ENCODE measurements at regions of chr3 and their contacts with region 1.

Region 1: DNA sequence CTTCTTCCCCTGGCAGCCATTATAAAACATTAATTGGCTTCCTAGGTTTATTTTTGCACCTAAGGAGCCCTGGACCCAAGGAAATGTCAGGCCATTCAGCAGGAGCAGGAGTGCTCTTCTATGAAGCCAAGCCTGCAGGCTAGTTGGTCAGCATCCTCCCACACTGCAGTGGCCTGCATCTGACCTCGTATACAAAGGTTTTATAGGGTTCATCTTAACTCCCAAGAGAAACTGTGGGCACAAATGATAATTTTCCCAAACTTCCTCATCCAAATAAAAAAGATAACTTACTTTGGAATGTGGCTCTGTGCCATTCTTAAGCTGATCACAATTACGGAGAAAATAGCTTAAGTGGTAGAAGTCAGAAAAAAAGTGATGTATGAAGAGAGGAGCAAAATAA is 19.4 kb downstream of the PLSCR1 start:
- DNase-seq: no peak
- ATAC-seq: no peak
- H3K4me3 ChIP-seq: no peak overlapping the region
- H3K27ac ChIP-seq: no peak overlapping the region
- H3K4me1 ChIP-seq: peaks cover 10% of the 10 kb centered on the region
- H3K27me3 ChIP-seq: no peaks in the 10 kb centered on the region
- CTCF ChIP-seq: no peak
- POLR2A ChIP-seq: no peak
- RAD21 ChIP-seq: no peak

Region 2: DNA sequence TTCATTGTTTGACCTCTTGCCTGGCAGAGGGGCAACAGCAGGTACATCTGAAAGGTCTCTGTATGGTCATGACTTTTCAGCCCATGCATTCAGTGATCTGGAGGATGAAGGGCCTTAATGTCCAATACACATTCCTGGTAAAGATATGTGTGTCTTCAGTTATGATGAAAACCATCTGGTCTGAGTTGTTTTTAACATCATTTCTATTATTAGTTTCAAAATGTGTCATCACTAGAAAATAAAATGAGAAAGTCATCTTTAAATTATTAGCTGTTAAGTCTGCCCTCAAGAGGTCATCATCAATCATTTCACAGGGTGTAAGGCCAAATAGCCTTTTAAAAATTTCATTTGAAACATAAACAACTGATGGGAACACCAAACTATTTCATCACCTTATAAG is 182.0 kb before region 1 on chr3:
- CTCF ChIA-PET with region 1: no interaction called
- POLR2A ChIA-PET with region 1: no interaction called
- dilution Hi-C with region 1: no loop called
- in situ Hi-C with region 1: no loop called
- intact Hi-C with region 1: loop called (anchors 5 kb)
- DNase-seq: peak; percentile 54
- ATAC-seq: no peak
- H3K4me3 ChIP-seq: no peak overlapping the region
- H3K27ac ChIP-seq: no peak overlapping the region
- H3K4me1 ChIP-seq: no peaks in the 10 kb centered on the region
- H3K27me3 ChIP-seq: no peaks in the 10 kb centered on the region
- CTCF ChIP-seq: no peak
- POLR2A ChIP-seq: no peak
- RAD21 ChIP-seq: no peak

Measured in IMR-90 (cell line).